CD4-positive, alpha-beta memory T cell (primary cell): ENCODE measurements at regions of chr1 and their contacts with region 1.

Region 1: DNA sequence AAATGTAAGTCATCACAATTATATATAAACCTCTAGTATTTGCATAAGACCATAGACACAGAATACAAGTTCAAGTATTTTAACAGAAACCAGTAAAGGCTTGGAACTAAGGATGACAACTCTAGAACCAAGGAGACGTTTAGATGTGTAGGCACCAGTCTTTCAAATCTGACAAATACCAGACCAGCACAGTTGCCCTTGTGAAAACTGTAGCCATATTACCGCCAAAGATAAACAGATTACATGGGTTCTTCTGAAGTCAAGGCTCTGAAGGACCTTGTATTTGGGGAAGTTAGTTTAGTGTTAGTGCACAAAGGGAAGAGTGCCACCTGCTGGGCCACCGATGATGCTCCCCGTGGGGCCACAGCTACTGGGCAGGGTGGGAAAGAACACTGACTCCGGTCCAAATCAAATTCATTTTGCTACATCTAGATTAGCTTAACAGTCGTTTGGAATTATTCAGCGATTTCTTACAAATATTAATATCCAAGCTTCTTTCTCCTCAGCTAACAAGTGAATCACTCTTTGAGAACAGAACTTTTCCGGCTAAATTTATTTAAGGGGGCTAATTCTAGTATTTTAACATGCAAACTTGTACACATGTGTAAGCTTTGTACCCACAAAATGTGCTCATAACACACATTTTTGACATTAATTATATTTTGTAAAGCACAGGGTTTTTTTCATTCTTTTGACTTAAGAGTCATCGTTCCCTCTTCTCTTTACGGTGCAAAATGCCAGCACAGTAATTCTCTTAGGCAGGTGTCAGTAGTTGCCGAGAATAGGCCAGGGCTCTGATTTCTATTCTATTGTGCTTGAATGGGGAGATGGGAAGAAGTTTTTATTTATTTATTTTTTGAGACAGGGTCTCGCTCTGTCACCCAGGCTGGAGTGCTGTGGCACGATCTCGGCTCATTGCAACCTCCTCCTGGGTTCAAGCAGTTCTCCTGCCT is 8.0 kb upstream of the NIBAN1 start:
- DNase-seq: peak; percentile 70 to 79 (median 74)
- H3K4me3 ChIP-seq: no peak overlapping the region
- H3K4me3 Mint-ChIP-seq: no peak overlapping the region
- H3K27ac ChIP-seq: no peak overlapping the region
- H3K27ac Mint-ChIP-seq: peak overlapping the region in 1 of 7 donors; percentile 56
- H3K4me1 ChIP-seq: peaks cover 4% of the 10 kb centered on the region
- H3K4me1 Mint-ChIP-seq: peaks cover 5 to 8% (median 5%) of the 10 kb centered on the region in 4 donors
- H3K27me3 ChIP-seq: no peaks in the 10 kb centered on the region
- H3K27me3 Mint-ChIP-seq: peaks cover 0 to 7% of the 10 kb centered on the region in 2 donors

Region 2: GRCh38 chr1:184965944-184966860 is 16.1 kb before region 1 on chr1:
- CTCF ChIA-PET with region 1: interaction called, 30 read pairs
- POLR2A ChIA-PET with region 1: interaction called, 3 read pairs
- intact Hi-C with region 1: no loop called
- DNase-seq: no peak
- H3K4me3 ChIP-seq: no peak overlapping the region
- H3K4me3 Mint-ChIP-seq: no peak overlapping the region
- H3K27ac ChIP-seq: no peak overlapping the region
- H3K27ac Mint-ChIP-seq: peak overlapping the region in 4 of 7 donors; percentile 19 to 73 (median 44)
- H3K4me1 ChIP-seq: peaks cover 28% of the 10 kb centered on the region
- H3K4me1 Mint-ChIP-seq: peaks cover 31 to 63% (median 43%) of the 10 kb centered on the region in 4 donors
- H3K27me3 ChIP-seq: no peaks in the 10 kb centered on the region
- H3K27me3 Mint-ChIP-seq: no peaks in the 10 kb centered on the region

Region 3: GRCh38 chr1:185170291-185170848 is 188.1 kb after region 1 on chr1:
- CTCF ChIA-PET with region 1: interaction called, 9 read pairs
- POLR2A ChIA-PET with region 1: no interaction called
- intact Hi-C with region 1: loop called (anchors 1 kb)
- DNase-seq: peak; percentile 41 to 51 (median 44)
- H3K4me3 ChIP-seq: no peak overlapping the region
- H3K4me3 Mint-ChIP-seq: peak overlapping the region in 1 of 8 donors; percentile 57
- H3K27ac ChIP-seq: no peak overlapping the region
- H3K27ac Mint-ChIP-seq: peak overlapping the region in 4 of 7 donors; percentile 37 to 55 (median 40)
- H3K4me1 ChIP-seq: no peaks in the 10 kb centered on the region
- H3K4me1 Mint-ChIP-seq: peaks cover 0 to 4% (median 2%) of the 10 kb centered on the region in 4 donors
- H3K27me3 ChIP-seq: no peaks in the 10 kb centered on the region
- H3K27me3 Mint-ChIP-seq: no peaks in the 10 kb centered on the region

Region 4: GRCh38 chr1:185681034-185681633 is 698.9 kb after region 1 on chr1:
- CTCF ChIA-PET with region 1: interaction called, 3 read pairs
- POLR2A ChIA-PET with region 1: no interaction called
- intact Hi-C with region 1: loop called (anchors 5 kb)
- DNase-seq: peak in 4 of 5 donors; percentile 36 to 43 (median 38)
- H3K4me3 ChIP-seq: no peak overlapping the region
- H3K4me3 Mint-ChIP-seq: peak overlapping the region in 1 of 8 donors; percentile 34
- H3K27ac ChIP-seq: no peak overlapping the region
- H3K27ac Mint-ChIP-seq: no peak overlapping the region
- H3K4me1 ChIP-seq: peaks cover 26% of the 10 kb centered on the region
- H3K4me1 Mint-ChIP-seq: peaks cover 19 to 32% (median 26%) of the 10 kb centered on the region in 4 donors
- H3K27me3 ChIP-seq: no peaks in the 10 kb centered on the region
- H3K27me3 Mint-ChIP-seq: no peaks in the 10 kb centered on the region

Region 5: GRCh38 chr1:185694081-185694480 is 711.8 kb after region 1 on chr1:
- CTCF ChIA-PET with region 1: interaction called, 5 read pairs
- POLR2A ChIA-PET with region 1: no interaction called
- intact Hi-C with region 1: loop called (anchors 5 kb)
- DNase-seq: peak in 3 of 5 donors; percentile 12 to 24 (median 17)
- H3K4me3 ChIP-seq: peak overlapping the region; percentile 4 to 53
- H3K4me3 Mint-ChIP-seq: peak overlapping the region; percentile 80 to 91 (median 86)
- H3K27ac ChIP-seq: peak overlapping the region; percentile 40
- H3K27ac Mint-ChIP-seq: peak overlapping the region; percentile 84 to 94 (median 92)
- H3K4me1 ChIP-seq: peaks cover 20% of the 10 kb centered on the region
- H3K4me1 Mint-ChIP-seq: peaks cover 13 to 19% (median 16%) of the 10 kb centered on the region in 4 donors
- H3K27me3 ChIP-seq: no peaks in the 10 kb centered on the region
- H3K27me3 Mint-ChIP-seq: peaks cover 6 to 8% of the 10 kb centered on the region in 2 donors